ENCODE measurements at regions of chr5 and their contacts with region 1.

Region 1: GRCh38 chr5:134041570-134042411 is 37.0 kb upstream of the VDAC1 start:
- DNase-seq: no peak
- ATAC-seq: no peak
- H3K4me3 ChIP-seq: no peak overlapping the region
- H3K27ac ChIP-seq: no peak overlapping the region
- H3K4me1 ChIP-seq: no peaks in the 10 kb centered on the region
- CTCF ChIP-seq: no peak
- EP300 ChIP-seq: no peak
- POLR2A ChIP-seq: no peak
- RAD21 ChIP-seq: no peak

Region 2: GRCh38 chr5:133996683-133997252 is 45.0 kb before region 1 on chr5:
- CTCF ChIA-PET with region 1: interaction called, 36 read pairs
- POLR2A ChIA-PET with region 1: no interaction called
- DNase-seq: no peak
- ATAC-seq: peak; percentile 36 to 62; a peak in 4 of 6 replicates
- H3K4me3 ChIP-seq: no peak overlapping the region
- H3K27ac ChIP-seq: no peak overlapping the region
- H3K4me1 ChIP-seq: peaks cover 85% of the 10 kb centered on the region
- CTCF ChIP-seq: peak; percentile 58
- EP300 ChIP-seq: no peak
- POLR2A ChIP-seq: no peak
- RAD21 ChIP-seq: 0 out of 5 replicates have a peak, but pooled peaks of 1 of the 2 experiments have one; percentile 10

Region 3: GRCh38 chr5:134053840-134054338 is 12.1 kb after region 1 on chr5:
- CTCF ChIA-PET with region 1: interaction called, 108 read pairs
- POLR2A ChIA-PET with region 1: interaction called, 3 read pairs
- DNase-seq: no peak
- ATAC-seq: peak in 1 of 2 experiments; percentile 20; a peak in 1 of 6 replicates
- H3K4me3 ChIP-seq: no peak overlapping the region
- H3K27ac ChIP-seq: no peak overlapping the region
- H3K4me1 ChIP-seq: peaks cover 5% of the 10 kb centered on the region
- CTCF ChIP-seq: no peak
- EP300 ChIP-seq: no peak
- POLR2A ChIP-seq: no peak
- RAD21 ChIP-seq: no peak

Region 4: DNA sequence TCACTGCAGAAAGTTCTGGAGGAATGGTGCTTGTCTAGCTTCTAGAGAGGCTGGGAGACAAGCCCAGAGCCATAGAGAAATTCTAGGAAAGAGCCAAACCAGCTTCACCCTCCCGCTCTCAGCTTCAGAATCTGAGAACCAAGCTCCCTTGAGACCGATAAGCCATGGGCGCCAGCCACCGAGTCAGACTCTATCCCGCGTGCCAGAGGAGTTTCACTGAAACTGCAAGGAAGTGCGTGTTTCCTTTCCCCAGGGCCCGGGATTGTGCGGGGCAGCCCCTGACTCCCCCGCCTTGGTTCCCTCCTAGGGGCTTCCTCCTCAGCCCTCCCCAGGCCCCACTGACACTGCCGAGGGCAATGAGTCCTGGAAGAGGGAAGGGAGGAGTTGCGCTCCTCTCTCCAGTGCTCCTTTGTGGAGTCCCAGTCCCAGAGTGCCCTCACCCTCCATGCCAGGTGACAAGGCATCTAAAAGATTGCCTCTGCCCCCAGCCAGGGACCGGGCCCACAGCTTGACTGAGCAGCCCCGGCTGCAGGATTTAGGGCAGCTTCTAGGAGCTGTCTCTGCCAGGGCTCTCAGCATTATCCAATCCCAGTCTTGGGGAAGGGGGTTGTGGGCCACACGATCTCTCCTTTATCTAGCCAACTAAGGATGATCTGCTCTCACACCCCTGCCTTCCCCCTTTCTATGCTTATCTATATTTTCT is 54.2 kb after region 1 on chr5:
- CTCF ChIA-PET with region 1: interaction called, 13 read pairs
- POLR2A ChIA-PET with region 1: no interaction called
- DNase-seq: no peak
- ATAC-seq: no peak
- H3K4me3 ChIP-seq: no peak overlapping the region
- H3K27ac ChIP-seq: no peak overlapping the region
- H3K4me1 ChIP-seq: peaks cover 36% of the 10 kb centered on the region
- CTCF ChIP-seq: no peak
- EP300 ChIP-seq: no peak
- POLR2A ChIP-seq: no peak
- RAD21 ChIP-seq: no peak

Region 5: GRCh38 chr5:134145779-134146581 is 104.2 kb after region 1 on chr5:
- CTCF ChIA-PET with region 1: interaction called, 546 read pairs
- POLR2A ChIA-PET with region 1: interaction called, 10 read pairs
- DNase-seq: peak; percentile 53 to 80
- ATAC-seq: peak; percentile 74 to 90
- H3K4me3 ChIP-seq: no peak overlapping the region
- H3K27ac ChIP-seq: no peak overlapping the region
- H3K4me1 ChIP-seq: peaks cover 8% of the 10 kb centered on the region; the same call in 2 of the 3 replicates
- CTCF ChIP-seq: peak; percentile 60
- EP300 ChIP-seq: no peak
- POLR2A ChIP-seq: no peak
- RAD21 ChIP-seq: peak; percentile 40 to 54; a peak in 4 of 5 replicates

Region 6: DNA sequence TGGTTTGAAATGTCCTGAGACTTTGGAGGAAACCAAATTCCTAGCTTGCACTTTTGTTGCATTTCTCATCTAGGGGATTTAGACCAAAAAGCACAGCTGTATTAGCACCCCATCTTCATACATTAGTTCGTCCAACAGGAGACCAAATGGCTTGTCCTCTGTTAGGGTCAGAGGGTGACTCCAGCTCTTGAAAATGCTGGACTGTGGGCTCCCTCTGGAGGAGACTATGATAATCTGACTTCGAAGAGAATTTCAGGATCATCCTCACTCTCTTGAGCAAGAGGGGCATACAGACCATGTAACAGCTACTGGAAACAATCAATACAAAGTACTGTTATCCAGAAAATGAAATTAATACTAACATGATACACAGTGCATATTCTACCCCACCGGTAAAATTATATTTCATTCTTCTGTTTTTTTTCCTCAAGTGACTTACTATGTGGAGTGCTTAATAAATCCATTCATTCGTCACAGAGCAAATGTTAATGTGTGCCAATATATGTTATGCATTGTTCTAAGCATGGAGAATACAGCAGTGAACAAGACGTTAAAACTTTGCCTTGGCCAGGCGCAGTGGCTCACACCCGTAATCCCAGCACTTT is 247.8 kb after region 1 on chr5:
- CTCF ChIA-PET with region 1: interaction called, 30 read pairs
- POLR2A ChIA-PET with region 1: no interaction called
- DNase-seq: peak; percentile 75 to 87
- ATAC-seq: peak; percentile 99
- H3K4me3 ChIP-seq: no peak overlapping the region
- H3K27ac ChIP-seq: no peak overlapping the region
- H3K4me1 ChIP-seq: no peaks in the 10 kb centered on the region; the same call in 2 of the 3 replicates
- CTCF ChIP-seq: peak; percentile 97
- EP300 ChIP-seq: no peak
- POLR2A ChIP-seq: no peak
- RAD21 ChIP-seq: peak; percentile 99